ENCODE measurements at regions of chr5 and their contacts with region 1.

Region 1: DNA sequence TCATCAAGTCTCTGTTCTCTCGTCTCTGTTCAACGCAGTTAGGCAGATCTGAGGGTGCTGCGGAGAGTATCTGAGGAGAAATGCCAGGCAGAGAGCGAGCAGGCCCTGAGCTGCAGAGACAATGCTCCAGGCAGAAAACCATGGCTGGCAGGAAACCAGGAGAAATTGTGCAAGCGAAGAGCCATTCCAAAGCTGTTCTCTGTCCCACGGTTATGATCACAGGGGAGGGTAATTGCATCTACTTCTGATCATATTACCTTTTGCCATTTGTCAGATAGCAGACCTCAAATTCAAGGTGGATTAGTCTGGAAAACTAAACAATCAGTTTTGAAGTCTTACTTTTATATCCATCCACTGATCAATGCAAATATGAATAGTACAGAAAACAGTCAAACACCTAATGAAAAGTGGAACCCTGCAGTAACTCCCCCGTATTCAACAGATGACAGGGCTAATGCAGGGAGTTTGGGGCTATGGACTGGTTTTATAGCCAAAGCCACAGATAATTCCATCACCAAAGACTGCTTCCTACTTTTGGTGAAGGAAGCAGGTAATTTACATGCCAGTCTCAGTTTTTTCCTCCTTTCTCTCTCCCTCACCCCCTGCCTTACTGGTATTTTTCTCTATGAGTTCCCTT is 228.0 kb downstream of the DCP2 start:
- DNase-seq: no peak
- ATAC-seq: no peak
- H3K4me3 ChIP-seq: no peak overlapping the region
- H3K27ac ChIP-seq: no peak overlapping the region
- H3K4me1 ChIP-seq: peaks cover 33 to 65% of the 10 kb centered on the region in 2 experiments
- H3K27me3 ChIP-seq: no peaks in the 10 kb centered on the region
- CTCF ChIP-seq: no peak
- POLR2A ChIP-seq: no peak
- RAD21 ChIP-seq: no peak

Region 2: GRCh38 chr5:113311301-113311700 is 106.7 kb after region 1 on chr5:
- CTCF ChIA-PET with region 1: no interaction called
- POLR2A ChIA-PET with region 1: no interaction called
- RAD21 ChIA-PET with region 1: no interaction called
- intact Hi-C with region 1: loop called (anchors 5 kb)
- DNase-seq: no peak
- ATAC-seq: no peak; the same call in 1 of the 2 replicates
- H3K4me3 ChIP-seq: no peak overlapping the region
- H3K27ac ChIP-seq: no peak overlapping the region
- H3K4me1 ChIP-seq: peaks cover 14 to 29% of the 10 kb centered on the region in 2 experiments
- H3K27me3 ChIP-seq: no peaks in the 10 kb centered on the region
- CTCF ChIP-seq: no peak
- POLR2A ChIP-seq: no peak
- RAD21 ChIP-seq: no peak

Measured in HCT116 (cell line).